Left lung (tissue), 14 donors: ENCODE measurements at regions of chr10 and their contacts with region 1.

Region 1: DNA sequence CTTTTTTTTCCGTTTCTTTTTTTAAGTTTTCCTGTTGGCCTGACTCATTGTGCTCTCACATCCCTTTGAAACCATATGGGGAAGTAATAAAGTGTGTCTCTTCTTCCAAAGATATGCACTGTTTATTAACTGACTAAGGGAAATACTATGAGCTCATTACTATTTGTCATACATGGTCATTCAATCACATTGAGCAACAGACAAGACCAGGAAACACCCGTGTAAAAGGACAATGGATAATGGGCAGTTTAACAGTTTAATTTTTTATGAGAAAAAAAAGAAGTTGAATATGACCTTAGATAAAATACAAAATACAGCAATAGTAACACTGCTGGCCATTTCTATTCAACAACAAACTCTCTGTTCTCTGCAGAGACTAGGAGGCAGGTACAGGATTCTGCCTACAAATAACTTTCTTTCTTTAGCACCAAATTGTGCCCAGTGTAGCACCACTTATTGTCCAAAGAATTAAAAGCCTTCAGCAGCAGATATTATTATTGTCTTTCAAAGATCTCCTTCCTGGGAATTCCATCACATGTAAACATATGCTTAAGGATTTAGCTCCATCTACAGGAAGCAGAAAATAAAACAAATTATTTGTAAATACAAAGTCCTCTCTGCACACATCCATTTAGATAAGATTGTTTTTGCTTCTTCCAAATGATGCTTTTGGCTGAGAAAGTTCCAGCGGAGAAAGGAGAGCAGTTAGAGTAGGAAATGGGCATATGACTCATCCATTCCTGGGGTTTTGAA is 55.0 kb upstream of the AKR1E2 start:
- DNase-seq: peak in 2 of 4 donors; percentile 29 to 49
- ATAC-seq: peak; percentile 83
- H3K4me3 ChIP-seq: no peak overlapping the region
- H3K27ac ChIP-seq: peak overlapping the region; percentile 53 to 70
- H3K4me1 ChIP-seq: peaks cover 0 to 14% of the 10 kb centered on the region in 2 donors
- H3K27me3 ChIP-seq: no peaks in the 10 kb centered on the region
- CTCF ChIP-seq: no peak

Region 2: GRCh38 chr10:3197348-3198003 is 1573.5 kb before region 1 on chr10:
- intact Hi-C with region 1: loop called in 1 of 2 experiments (anchors 10 kb)
- DNase-seq: peak; percentile 70 to 93 (median 77)
- ATAC-seq: peak; percentile 97
- H3K4me3 ChIP-seq: no peak overlapping the region
- H3K27ac ChIP-seq: no peak overlapping the region
- H3K4me1 ChIP-seq: peaks cover 0 to 18% of the 10 kb centered on the region in 2 donors
- H3K27me3 ChIP-seq: peaks cover 0 to 37% of the 10 kb centered on the region in 2 donors
- CTCF ChIP-seq: peak; percentile 82 to 89